Heart left ventricle (tissue), 16 donors: ENCODE measurements at regions of chr1 and their contacts with region 1.

Region 1: DNA sequence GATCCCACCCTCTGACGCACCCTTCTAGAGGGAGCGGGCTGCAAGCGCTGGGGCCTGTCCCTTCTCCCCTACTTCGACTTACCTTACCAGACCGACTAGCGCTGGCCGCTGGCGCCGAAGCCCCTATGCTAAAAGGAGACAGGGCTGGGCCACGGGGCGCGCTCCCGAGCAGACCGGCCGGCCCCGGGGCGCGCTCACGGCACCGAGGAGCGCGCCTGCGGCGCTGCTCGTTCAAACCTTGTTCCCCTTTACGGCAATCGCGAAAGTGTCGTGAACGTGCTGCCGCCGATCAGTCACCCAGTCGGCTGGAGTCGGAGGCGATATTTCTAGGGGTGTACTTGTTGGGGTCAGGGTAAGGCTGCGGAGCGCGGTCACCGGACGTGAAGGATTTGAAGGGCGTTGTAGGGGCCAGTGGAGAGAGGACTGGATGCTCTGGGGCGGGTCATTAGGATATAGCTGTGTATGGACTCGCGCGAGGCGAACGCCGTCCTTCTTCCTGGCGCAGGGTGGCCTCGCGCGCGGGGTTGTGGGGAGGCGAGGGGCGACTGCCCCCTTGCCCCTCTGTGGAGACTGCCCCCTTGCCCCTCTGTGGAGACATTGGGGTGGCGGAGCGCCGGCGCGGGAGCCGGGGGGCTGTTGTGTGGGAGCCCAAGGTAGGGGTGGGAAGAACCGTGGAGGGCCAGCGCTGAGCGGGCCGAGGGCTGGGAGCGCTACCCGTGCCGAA is at the starts of genes CEPT1 and DRAM2:
- DNase-seq: peak; percentile 94 to 99 (median 98)
- ATAC-seq: peak; percentile 92 to 97 (median 97)
- H3K4me3 ChIP-seq: peak within 1 kb of the TSS; percentile 57 to 94 (median 86)
- H3K27ac ChIP-seq: peak within 1 kb of the TSS; percentile 87 to 97 (median 95)
- H3K4me1 ChIP-seq: peaks cover 0 to 56% (median 29%) of the 10 kb centered on the region in 12 donors
- H3K27me3 ChIP-seq: no peaks in the 10 kb centered on the region
- CTCF ChIP-seq: peak in 1 of 12 donors; percentile 11
- POLR2A ChIP-seq: no peak
- total RNA-seq, gene CEPT1: 7.4 to 26.9 (median 11.6) TPM
- total RNA-seq, gene DRAM2: 32.1 to 49.8 (median 36.6) TPM

Region 2: DNA sequence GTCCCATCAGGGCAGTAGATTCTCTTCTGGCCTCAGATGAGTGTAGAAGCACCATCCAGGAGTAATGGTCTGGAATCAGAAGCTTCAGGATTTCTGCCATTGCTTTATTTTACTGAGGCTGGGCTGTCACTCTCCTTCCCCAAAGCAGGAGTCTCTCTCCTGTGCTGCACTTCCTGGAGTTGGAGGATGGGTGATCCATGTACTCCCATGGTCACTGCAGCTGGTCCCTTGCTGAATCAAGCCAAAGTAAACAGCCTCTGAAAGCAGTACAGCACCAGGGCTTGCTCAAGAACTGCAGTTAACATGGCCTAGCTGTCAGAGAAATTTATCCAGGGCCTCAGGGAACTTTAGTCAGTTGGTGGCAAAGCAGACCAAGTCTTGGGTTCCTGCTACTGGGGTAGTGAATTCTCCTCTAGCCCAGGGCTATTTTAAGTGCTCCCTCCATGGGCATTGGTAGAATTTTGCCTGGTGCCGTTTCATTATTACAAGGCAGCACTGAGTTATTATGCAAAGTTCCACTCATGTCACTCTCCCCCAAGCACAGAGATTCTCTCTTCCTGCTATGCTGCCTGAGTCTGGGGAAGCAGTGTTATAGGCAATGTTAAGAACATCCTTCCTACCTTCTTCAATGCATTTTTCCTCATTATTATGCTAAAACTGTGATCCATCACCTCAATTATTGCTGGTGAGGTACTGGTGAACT is 29.8 kb before region 1 on chr1:
- intact Hi-C with region 1: no loop called
- DNase-seq: no peak
- ATAC-seq: peak in 1 of 4 donors; percentile 29
- H3K4me3 ChIP-seq: no peak overlapping the region
- H3K27ac ChIP-seq: no peak overlapping the region
- H3K4me1 ChIP-seq: no peaks in the 10 kb centered on the region
- H3K27me3 ChIP-seq: no peaks in the 10 kb centered on the region
- CTCF ChIP-seq: no peak
- POLR2A ChIP-seq: no peak

Region 3: DNA sequence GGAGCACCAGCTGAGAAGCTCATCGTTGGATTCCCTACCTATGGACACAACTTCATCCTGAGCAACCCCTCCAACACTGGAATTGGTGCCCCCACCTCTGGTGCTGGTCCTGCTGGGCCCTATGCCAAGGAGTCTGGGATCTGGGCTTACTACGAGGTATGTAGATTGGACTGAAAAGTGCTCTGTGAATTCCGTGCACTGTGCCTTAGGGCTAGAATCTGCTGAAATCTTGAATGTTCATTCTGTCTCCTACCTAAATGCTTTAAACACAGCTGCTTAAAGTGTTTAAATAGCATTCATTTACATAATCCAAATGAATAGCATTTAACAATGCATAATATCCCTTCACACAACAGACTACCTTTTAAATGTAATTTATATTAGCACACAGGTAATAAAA is 178.4 kb after region 1 on chr1:
- intact Hi-C with region 1: no loop called
- DNase-seq: no peak
- ATAC-seq: no peak
- H3K4me3 ChIP-seq: no peak overlapping the region
- H3K27ac ChIP-seq: no peak overlapping the region
- H3K4me1 ChIP-seq: no peaks in the 10 kb centered on the region
- H3K27me3 ChIP-seq: peaks cover 0 to 10% (median 0%) of the 10 kb centered on the region in 9 donors
- CTCF ChIP-seq: no peak
- POLR2A ChIP-seq: no peak

Region 4: DNA sequence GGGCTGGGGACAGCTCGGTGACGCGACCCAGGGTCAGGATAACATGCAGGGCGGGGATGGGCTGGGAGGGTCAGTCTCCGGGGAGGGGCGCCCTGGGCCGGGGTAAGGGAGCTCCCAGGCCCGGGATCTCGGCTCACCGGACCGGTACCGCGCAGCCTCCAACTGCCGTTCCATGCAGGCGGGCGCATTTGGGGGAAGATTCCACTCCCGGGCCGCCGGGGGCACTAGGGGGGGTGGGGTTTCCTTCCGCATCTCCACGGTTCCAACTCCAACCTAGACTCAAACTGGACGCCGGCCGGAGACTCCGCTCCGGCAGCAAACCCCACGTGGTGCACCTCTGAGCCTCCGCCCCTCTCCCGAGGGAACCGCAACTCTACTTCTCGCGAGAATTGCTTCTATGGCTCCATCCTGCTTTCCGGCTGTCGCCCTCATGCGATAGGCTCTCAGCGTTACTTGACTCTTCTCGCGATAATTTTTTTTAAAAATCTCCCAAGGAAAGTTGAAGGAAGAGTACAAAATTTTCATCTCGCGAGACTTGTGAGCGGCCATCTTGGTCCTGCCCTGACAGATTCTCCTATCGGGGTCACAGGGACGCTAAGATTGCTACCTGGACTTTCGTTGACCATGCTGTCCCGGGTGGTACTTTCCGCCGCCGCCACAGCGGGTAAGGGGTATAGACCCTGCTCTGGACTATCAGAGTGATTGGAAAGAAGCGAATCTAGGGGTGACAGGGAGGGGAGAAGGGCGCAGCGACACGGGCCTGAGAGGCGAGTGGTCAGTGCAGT is 309.0 kb after region 1 on chr1 and contains the starts of genes ATP5PB and WDR77:
- intact Hi-C with region 1: loop called in 1 of 10 experiments (anchors 5 kb)
- DNase-seq: peak; percentile 93 to 97 (median 96)
- ATAC-seq: peak; percentile 93 to 96 (median 94)
- H3K4me3 ChIP-seq: peak within 1 kb of the TSS; percentile 58 to 96 (median 85)
- H3K27ac ChIP-seq: peak within 1 kb of the TSS; percentile 76 to 96 (median 90)
- H3K4me1 ChIP-seq: peaks cover 5 to 65% (median 46%) of the 10 kb centered on the region in 12 donors
- H3K27me3 ChIP-seq: no peaks in the 10 kb centered on the region
- CTCF ChIP-seq: peak in 1 of 12 donors; percentile 21
- POLR2A ChIP-seq: no peak
- total RNA-seq, gene ATP5PB: 394 to 878 (median 625) TPM
- total RNA-seq, gene WDR77: 30.5 to 48.4 (median 34.0) TPM